ENCODE measurements at regions of chr10 and their contacts with region 1.

Region 1: DNA sequence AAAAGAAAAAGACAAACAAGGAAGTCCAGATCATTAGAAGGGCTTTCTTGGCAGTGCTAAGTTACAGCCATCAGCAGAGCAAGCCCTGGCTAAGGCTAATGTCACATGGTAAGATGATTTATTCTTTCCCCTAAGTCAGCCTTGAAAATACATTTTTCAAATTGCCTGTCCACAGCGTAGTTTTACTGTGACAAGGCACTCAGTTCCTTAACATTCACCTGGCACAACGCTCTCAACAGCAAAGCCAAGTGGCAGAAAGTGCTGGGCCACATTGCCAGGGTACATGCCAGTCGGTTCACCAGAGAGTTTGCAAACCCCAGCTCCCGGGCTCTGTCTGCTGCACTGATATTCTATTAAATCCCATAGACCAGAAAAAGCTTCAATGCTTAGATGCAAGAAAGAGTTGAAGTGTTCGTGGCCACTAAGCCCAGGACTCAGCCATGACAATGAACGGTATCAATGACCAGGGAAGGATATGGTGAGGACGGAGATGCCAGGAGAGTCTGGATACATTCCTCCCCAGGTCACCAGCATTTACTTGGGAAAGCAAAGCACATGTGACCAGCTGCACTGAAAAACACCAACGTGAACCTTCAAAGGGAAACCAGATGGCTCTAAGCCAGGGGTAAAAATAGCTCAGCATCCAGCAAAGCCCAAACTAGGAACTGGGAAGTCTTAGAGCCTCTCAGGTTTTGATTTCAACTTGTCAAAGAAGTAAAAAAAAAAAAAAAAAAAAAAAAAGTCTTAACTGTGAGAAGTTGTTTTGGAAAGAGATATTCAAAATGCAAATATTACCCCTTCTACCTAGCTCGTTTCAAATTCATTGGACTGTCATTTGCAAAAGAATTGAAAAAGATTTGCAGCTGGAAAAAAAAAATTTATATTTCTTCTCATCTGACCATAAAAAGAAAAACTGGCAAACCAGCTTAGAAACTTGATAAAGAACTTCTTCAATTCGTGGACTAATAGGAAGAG is 23.9 kb upstream of the MPP7 start:
- DNase-seq: no peak
- H3K4me3 ChIP-seq: no peak overlapping the region
- H3K4me3 Mint-ChIP-seq: no peak overlapping the region
- H3K27ac Mint-ChIP-seq: no peak overlapping the region
- H3K4me1 ChIP-seq: peaks cover 12% of the 10 kb centered on the region
- H3K4me1 Mint-ChIP-seq: peaks cover 29% of the 10 kb centered on the region
- H3K27me3 ChIP-seq: no peaks in the 10 kb centered on the region
- H3K27me3 Mint-ChIP-seq: no peaks in the 10 kb centered on the region
- CTCF ChIP-seq: no peak

Region 2: GRCh38 chr10:28312572-28312971 is 14.2 kb before region 1 on chr10:
- CTCF ChIA-PET with region 1: no interaction called
- POLR2A ChIA-PET with region 1: no interaction called
- intact Hi-C with region 1: loop called (anchors 2 kb)
- DNase-seq: no peak
- H3K4me3 ChIP-seq: no peak overlapping the region
- H3K4me3 Mint-ChIP-seq: no peak overlapping the region
- H3K27ac Mint-ChIP-seq: no peak overlapping the region
- H3K4me1 ChIP-seq: no peaks in the 10 kb centered on the region; the same call in 1 of the 2 replicates
- H3K4me1 Mint-ChIP-seq: peaks cover 6% of the 10 kb centered on the region
- H3K27me3 ChIP-seq: no peaks in the 10 kb centered on the region
- H3K27me3 Mint-ChIP-seq: no peaks in the 10 kb centered on the region
- CTCF ChIP-seq: no peak

Region 3: GRCh38 chr10:28343987-28344897 is 17.4 kb after region 1 on chr10:
- CTCF ChIA-PET with region 1: no interaction called
- POLR2A ChIA-PET with region 1: no interaction called
- intact Hi-C with region 1: no loop called
- DNase-seq: no peak
- H3K4me3 ChIP-seq: no peak overlapping the region
- H3K4me3 Mint-ChIP-seq: no peak overlapping the region
- H3K27ac Mint-ChIP-seq: no peak overlapping the region
- H3K4me1 ChIP-seq: peaks cover 13% of the 10 kb centered on the region; the same call in 1 of the 2 replicates
- H3K4me1 Mint-ChIP-seq: peaks cover 19% of the 10 kb centered on the region
- H3K27me3 ChIP-seq: no peaks in the 10 kb centered on the region
- H3K27me3 Mint-ChIP-seq: no peaks in the 10 kb centered on the region
- CTCF ChIP-seq: no peak

Measured in Caco-2 (cell line).